Activated CD4-positive, alpha-beta T cell treated with anti-CD3 and anti-CD28 coated beads for 36 hours (primary cell): ENCODE measurements at regions of chr13 and their contacts with region 1.

Region 1: DNA sequence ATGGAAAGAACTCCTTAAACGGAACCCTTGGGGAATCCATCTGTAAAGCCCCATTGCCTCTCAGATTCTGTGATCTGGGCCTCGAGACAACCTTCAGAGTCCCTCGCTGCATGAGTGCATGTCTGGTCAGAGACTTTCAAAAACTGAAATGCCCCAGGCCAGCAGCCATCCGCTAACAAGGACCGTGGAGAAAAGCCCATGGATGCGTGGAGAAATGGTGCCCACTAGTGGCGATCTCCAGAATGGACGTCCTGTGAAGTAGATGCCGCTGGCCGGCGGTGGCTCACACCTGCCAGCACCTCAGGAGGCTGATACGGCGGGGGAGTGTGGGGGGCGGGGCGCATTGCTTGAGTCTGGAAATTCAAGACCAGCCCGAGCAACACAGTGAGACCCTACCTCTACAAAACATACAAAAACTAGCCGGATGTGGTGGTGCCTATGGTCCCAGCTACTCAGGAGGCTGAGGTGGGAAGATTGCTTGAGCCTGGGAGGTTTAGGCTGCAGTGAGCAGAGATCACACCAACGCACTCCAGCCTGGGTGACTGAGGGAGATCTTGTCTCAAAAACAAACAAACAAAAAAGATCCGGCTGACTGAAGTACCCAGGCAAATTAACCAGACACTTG is 7.9 kb upstream of the CDC16 start:
- DNase-seq: peak; percentile 93
- ATAC-seq: peak; percentile 91
- H3K4me3 Mint-ChIP-seq: no peak overlapping the region
- H3K27ac Mint-ChIP-seq: peak overlapping the region; percentile 65
- H3K4me1 Mint-ChIP-seq: peaks cover 52% of the 10 kb centered on the region
- H3K27me3 Mint-ChIP-seq: no peaks in the 10 kb centered on the region

Region 2: GRCh38 chr13:113584205-113584869 is 642.5 kb before region 1 on chr13 and contains the start of gene TFDP1:
- CTCF ChIA-PET with region 1: no interaction called
- POLR2A ChIA-PET with region 1: no interaction called
- intact Hi-C with region 1: loop called in 1 of 2 experiments (anchors 2 kb)
- DNase-seq: peak; percentile 93
- ATAC-seq: peak; percentile 92
- H3K4me3 Mint-ChIP-seq: peak within 1 kb of the TSS; percentile 90
- H3K27ac Mint-ChIP-seq: peak within 1 kb of the TSS; percentile 80
- H3K4me1 Mint-ChIP-seq: peaks cover 36% of the 10 kb centered on the region
- H3K27me3 Mint-ChIP-seq: no peaks in the 10 kb centered on the region
- total RNA-seq, gene TFDP1: 159 to 175 TPM

Region 3: GRCh38 chr13:113951246-113951999 is 275.4 kb before region 1 on chr13:
- CTCF ChIA-PET with region 1: interaction called, 3 read pairs
- POLR2A ChIA-PET with region 1: no interaction called
- intact Hi-C with region 1: loop called (anchors 1 kb)
- DNase-seq: peak; percentile 83
- ATAC-seq: peak; percentile 89
- H3K4me3 Mint-ChIP-seq: no peak overlapping the region
- H3K27ac Mint-ChIP-seq: no peak overlapping the region
- H3K4me1 Mint-ChIP-seq: peaks cover 6% of the 10 kb centered on the region
- H3K27me3 Mint-ChIP-seq: no peaks in the 10 kb centered on the region

Region 4: GRCh38 chr13:114102126-114102520 is 124.7 kb before region 1 on chr13:
- CTCF ChIA-PET with region 1: no interaction called
- POLR2A ChIA-PET with region 1: no interaction called
- intact Hi-C with region 1: no loop called
- DNase-seq: peak; percentile 14
- ATAC-seq: no peak
- H3K4me3 Mint-ChIP-seq: no peak overlapping the region
- H3K27ac Mint-ChIP-seq: peak overlapping the region; percentile 7
- H3K4me1 Mint-ChIP-seq: peaks cover 62% of the 10 kb centered on the region
- H3K27me3 Mint-ChIP-seq: no peaks in the 10 kb centered on the region

Region 5: GRCh38 chr13:114132419-114133121 is 94.2 kb before region 1 on chr13 and contains the start of gene RASA3:
- CTCF ChIA-PET with region 1: interaction called, 5 read pairs
- POLR2A ChIA-PET with region 1: no interaction called
- intact Hi-C with region 1: loop called in 1 of 2 experiments (anchors 2 kb)
- DNase-seq: peak; percentile 74
- ATAC-seq: peak; percentile 35
- H3K4me3 Mint-ChIP-seq: peak within 1 kb of the TSS; percentile 100
- H3K27ac Mint-ChIP-seq: peak within 1 kb of the TSS; percentile 95
- H3K4me1 Mint-ChIP-seq: peaks cover 39% of the 10 kb centered on the region
- H3K27me3 Mint-ChIP-seq: no peaks in the 10 kb centered on the region
- total RNA-seq, gene RASA3: 33.0 to 34.7 TPM

Region 6: DNA sequence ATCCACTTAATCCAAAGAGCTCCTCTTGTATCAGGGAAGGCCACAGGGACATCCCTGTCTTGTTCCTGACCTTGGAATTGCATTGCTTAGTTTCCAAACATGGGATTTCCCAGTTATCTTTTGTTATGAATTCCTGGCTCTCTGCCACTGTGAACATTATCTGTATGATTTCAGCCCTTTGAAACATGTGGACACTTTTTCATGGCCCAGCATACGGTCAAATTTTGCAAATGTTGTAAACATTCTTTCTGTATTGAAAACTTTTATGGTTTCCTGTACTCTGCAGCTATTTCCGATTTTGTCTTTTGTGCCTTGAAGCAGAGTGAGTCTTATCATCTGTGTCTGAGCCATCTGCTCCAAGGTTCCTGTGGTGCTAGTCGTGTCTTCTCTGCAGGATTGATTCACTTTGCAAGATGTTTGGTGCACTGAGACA is 52.3 kb before region 1 on chr13:
- CTCF ChIA-PET with region 1: no interaction called
- POLR2A ChIA-PET with region 1: no interaction called
- intact Hi-C with region 1: no loop called
- DNase-seq: no peak
- ATAC-seq: no peak
- H3K4me3 Mint-ChIP-seq: no peak overlapping the region
- H3K27ac Mint-ChIP-seq: no peak overlapping the region
- H3K4me1 Mint-ChIP-seq: peaks cover 26% of the 10 kb centered on the region
- H3K27me3 Mint-ChIP-seq: no peaks in the 10 kb centered on the region

Region 7: GRCh38 chr13:114213980-114214379 is 12.8 kb before region 1 on chr13:
- CTCF ChIA-PET with region 1: interaction called, 11 read pairs
- POLR2A ChIA-PET with region 1: no interaction called
- intact Hi-C with region 1: no loop called
- DNase-seq: no peak
- ATAC-seq: no peak
- H3K4me3 Mint-ChIP-seq: no peak overlapping the region
- H3K27ac Mint-ChIP-seq: no peak overlapping the region
- H3K4me1 Mint-ChIP-seq: peaks cover 29% of the 10 kb centered on the region
- H3K27me3 Mint-ChIP-seq: no peaks in the 10 kb centered on the region

Region 8: DNA sequence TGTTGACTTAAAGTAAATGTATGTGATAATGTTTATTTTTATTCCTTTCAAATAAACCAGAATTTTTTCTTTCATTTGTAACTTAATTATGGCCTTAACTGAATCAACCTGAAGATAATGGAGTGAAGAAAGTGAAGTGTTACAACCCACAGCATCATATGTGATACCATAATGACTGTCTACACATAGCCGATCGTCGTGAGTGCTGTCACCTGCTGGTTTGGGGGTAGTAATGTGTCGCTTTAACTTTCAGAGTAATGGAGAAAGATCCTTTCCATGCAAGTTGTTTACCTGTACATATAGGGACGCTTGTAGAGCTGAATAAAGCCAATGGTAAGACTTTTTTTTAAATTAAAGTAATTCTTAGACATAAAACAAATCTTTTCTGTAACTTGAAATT is 17.8 kb after region 1 on chr13:
- CTCF ChIA-PET with region 1: no interaction called
- POLR2A ChIA-PET with region 1: no interaction called
- intact Hi-C with region 1: no loop called
- DNase-seq: no peak
- ATAC-seq: no peak
- H3K4me3 Mint-ChIP-seq: no peak overlapping the region
- H3K27ac Mint-ChIP-seq: no peak overlapping the region
- H3K4me1 Mint-ChIP-seq: peaks cover 4% of the 10 kb centered on the region
- H3K27me3 Mint-ChIP-seq: no peaks in the 10 kb centered on the region